MCF 10A (cell line): ENCODE measurements at regions of chr2 and their contacts with region 1.

Region 1: GRCh38 chr2:171160119-171160955 is at the start of gene TLK1:
- DNase-seq: peak; percentile 64
- H3K4me3 Mint-ChIP-seq: peak within 1 kb of the TSS; percentile 95
- H3K27ac Mint-ChIP-seq: peak within 1 kb of the TSS; percentile 91
- H3K4me1 Mint-ChIP-seq: peaks cover 22% of the 10 kb centered on the region
- H3K27me3 Mint-ChIP-seq: no peaks in the 10 kb centered on the region
- CTCF ChIP-seq: no peak
- total RNA-seq, gene TLK1: 59.2 and 60.6 TPM in 2 replicates

Region 2: DNA sequence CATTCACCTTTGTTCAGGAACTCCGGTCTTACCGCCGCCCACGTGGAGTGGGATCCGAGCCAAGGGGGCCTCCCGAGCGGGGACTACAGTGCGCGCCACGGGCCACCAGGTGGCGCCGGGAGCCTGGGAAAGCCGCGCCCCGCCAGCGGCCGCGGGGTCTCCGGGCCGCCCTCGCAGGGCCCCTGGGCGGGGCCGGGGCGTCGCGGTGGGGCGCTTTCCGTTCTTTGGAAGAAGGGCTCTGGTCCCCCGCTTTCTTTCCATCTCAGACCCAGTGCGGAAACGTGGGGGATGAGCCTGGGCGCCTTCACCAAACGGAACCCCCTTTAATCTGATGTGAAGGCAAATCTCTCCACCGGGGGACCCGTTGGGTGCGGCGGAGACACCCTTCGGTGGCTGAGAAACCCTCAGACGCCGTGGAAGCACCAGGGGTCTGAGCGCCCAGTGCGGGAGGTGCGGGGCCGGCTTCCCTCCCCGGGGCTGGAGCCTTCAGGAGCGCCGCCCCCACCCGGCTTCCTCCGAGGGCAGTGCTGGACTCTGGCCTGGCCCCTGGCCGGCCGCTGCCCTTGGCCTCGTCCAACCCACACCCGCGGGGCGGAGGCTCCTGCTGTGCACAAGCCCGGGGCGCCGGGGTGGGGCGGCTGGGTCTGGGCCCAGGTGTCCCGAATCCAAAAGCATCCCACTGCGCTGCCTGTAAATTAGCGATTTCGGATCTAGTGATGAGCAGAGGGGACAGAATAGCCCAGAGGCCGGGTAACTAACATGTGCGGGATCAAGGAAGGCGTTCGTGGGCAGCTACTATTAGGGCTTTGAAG is 186.6 kb before region 1 on chr2:
- CTCF ChIA-PET with region 1: interaction called, 10 read pairs
- POLR2A ChIA-PET with region 1: interaction called, 14 read pairs
- intact Hi-C with region 1: loop called (anchors 1 kb)
- DNase-seq: peak; percentile 86
- H3K4me3 Mint-ChIP-seq: peak overlapping the region; percentile 71
- H3K27ac Mint-ChIP-seq: peak overlapping the region; percentile 19
- H3K4me1 Mint-ChIP-seq: no peaks in the 10 kb centered on the region
- H3K27me3 Mint-ChIP-seq: no peaks in the 10 kb centered on the region
- CTCF ChIP-seq: peak; percentile 97

Region 3: DNA sequence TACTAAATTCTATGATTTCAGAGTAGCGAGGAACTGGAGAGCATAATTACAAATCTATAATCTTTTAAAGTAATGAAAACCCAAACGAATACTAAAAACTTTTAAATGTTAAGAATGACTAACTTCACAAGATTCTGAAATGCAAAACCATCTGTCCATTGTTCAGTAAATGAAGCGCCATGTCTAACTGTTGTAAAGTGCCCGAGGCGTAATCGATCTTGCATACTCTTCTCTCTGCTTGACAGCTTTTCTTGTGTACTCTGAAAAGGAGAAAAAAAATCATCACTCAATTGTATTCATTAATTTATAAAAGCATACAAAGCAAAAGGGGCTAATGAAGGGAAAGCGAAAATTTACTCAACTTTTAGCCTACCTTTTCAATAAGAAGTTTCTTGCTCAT is 110.6 kb before region 1 on chr2:
- CTCF ChIA-PET with region 1: no interaction called
- POLR2A ChIA-PET with region 1: interaction called, 13 read pairs
- intact Hi-C with region 1: no loop called
- DNase-seq: no peak
- H3K4me3 Mint-ChIP-seq: no peak overlapping the region
- H3K27ac Mint-ChIP-seq: no peak overlapping the region
- H3K4me1 Mint-ChIP-seq: no peaks in the 10 kb centered on the region
- H3K27me3 Mint-ChIP-seq: no peaks in the 10 kb centered on the region
- CTCF ChIP-seq: no peak

Region 4: DNA sequence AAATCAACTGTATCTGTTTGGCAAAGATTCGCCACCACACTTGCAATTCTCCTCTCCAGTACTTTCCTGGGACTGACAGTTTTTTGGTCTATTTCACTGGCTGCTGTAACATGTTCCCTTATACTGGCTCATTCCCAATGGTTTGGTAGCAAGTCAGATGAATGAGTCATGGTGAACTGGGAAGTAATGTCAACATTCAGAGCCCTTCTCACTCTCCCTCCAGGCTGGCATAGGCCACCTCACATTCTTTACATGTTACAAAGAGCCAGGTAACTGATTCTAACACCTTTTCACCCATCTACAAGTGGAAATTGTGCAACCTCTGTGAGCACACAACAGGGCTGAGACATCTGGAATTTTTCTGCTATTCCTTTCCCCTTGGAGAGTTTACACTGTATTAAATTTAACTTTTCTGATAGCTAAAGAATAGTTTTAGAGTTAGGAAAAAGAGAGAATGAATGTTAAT is 111.7 kb after region 1 on chr2:
- CTCF ChIA-PET with region 1: interaction called, 3 read pairs
- POLR2A ChIA-PET with region 1: interaction called, 26 read pairs
- intact Hi-C with region 1: loop called (anchors 2 kb)
- DNase-seq: peak; percentile 98
- H3K4me3 Mint-ChIP-seq: peak overlapping the region; percentile 42
- H3K27ac Mint-ChIP-seq: peak overlapping the region; percentile 79
- H3K4me1 Mint-ChIP-seq: peaks cover 19% of the 10 kb centered on the region
- H3K27me3 Mint-ChIP-seq: no peaks in the 10 kb centered on the region
- CTCF ChIP-seq: no peak

Region 5: GRCh38 chr2:171416009-171416926 is 255.9 kb after region 1 on chr2:
- CTCF ChIA-PET with region 1: interaction called, 17 read pairs
- POLR2A ChIA-PET with region 1: interaction called, 53 read pairs
- intact Hi-C with region 1: loop called (anchors 1 kb)
- DNase-seq: peak; percentile 95
- H3K4me3 Mint-ChIP-seq: peak overlapping the region; percentile 13
- H3K27ac Mint-ChIP-seq: no peak overlapping the region
- H3K4me1 Mint-ChIP-seq: peaks cover 13% of the 10 kb centered on the region
- H3K27me3 Mint-ChIP-seq: no peaks in the 10 kb centered on the region
- CTCF ChIP-seq: peak; percentile 78